ENCODE measurements at regions of chr2 and their contacts with region 1.

Region 1: DNA sequence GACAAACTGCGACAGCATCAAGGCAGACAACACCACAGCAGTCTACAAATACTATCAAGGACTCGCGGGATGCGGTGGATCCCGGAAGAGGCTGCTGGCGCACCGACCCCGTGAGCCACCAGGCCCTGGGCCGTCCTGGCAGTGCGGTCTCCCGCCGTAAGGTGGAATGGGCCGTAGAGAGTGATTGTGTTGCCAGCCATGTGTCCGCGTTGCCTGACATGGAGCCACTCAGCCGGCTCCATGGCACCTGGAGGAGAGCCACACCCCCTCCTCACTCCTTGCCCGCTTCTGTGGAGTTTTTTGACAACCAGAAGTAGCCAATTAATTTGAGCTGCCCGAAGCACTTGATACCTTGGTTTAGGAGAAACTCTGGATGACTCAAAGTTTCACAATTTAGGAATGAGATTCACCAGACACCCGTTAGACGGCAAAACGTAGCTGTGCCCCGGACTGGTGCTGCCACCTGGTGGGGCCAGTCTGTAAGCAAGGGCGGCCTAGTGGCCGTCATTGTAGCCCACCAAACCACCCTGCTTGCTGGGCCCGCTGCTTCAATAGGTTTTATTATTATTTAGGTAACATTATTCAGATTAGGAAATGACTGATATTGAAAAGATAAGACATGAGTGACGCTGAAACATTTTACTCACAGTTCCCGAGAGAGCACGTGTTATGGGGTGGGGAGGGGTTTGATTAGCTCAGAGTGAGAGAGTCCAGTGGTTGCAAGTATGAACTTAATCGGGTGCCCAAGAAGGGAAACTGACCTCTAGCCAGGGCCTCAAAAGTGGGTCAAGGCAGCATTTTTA is 10.2 kb upstream of the IMP4 start:
- DNase-seq: peak; percentile 54
- ATAC-seq: peak; percentile 62
- H3K4me3 ChIP-seq: peak overlapping the region; percentile 0 to 58 (median 53); a peak in 4 of 6 replicates
- H3K27ac ChIP-seq: no peak overlapping the region
- H3K4me1 ChIP-seq: peaks cover 46% of the 10 kb centered on the region
- H3K27me3 ChIP-seq: peaks cover 0 to 43% of the 10 kb centered on the region in 2 experiments; a peak in 3 of 5 replicates
- CTCF ChIP-seq: peak; percentile 97
- EP300 ChIP-seq: no peak
- POLR2A ChIP-seq: no peak
- RAD21 ChIP-seq: peak; percentile 95

Region 2: GRCh38 chr2:130150181-130151144 is 182.0 kb before region 1 on chr2:
- CTCF ChIA-PET with region 1: interaction called, 14 read pairs
- POLR2A ChIA-PET with region 1: no interaction called
- in situ Hi-C with region 1: loop called (anchors 10 kb)
- intact Hi-C with region 1: no loop called
- DNase-seq: no peak
- ATAC-seq: no peak
- H3K4me3 ChIP-seq: no peak overlapping the region
- H3K27ac ChIP-seq: no peak overlapping the region
- H3K4me1 ChIP-seq: no peaks in the 10 kb centered on the region
- H3K27me3 ChIP-seq: no peaks in the 10 kb centered on the region
- CTCF ChIP-seq: no peak
- EP300 ChIP-seq: no peak
- POLR2A ChIP-seq: no peak
- RAD21 ChIP-seq: no peak

Region 3: GRCh38 chr2:130181325-130181879 is 151.1 kb before region 1 on chr2 and contains the start of gene SMPD4:
- CTCF ChIA-PET with region 1: interaction called, 19 read pairs
- POLR2A ChIA-PET with region 1: interaction called, 13 read pairs
- in situ Hi-C with region 1: loop called (anchors 5 kb)
- intact Hi-C with region 1: loop called (anchors 1 kb)
- DNase-seq: peak; percentile 96
- ATAC-seq: peak; percentile 73
- H3K4me3 ChIP-seq: peak within 1 kb of the TSS; percentile 97 to 99 (median 99)
- H3K27ac ChIP-seq: peak within 1 kb of the TSS; percentile 92
- H3K4me1 ChIP-seq: peaks cover 35% of the 10 kb centered on the region
- H3K27me3 ChIP-seq: peaks cover 0 to 4% of the 10 kb centered on the region in 2 experiments; a peak in 2 of 5 replicates
- CTCF ChIP-seq: no peak
- EP300 ChIP-seq: peak; percentile 23 to 50; a peak in 1 of 4 replicates
- POLR2A ChIP-seq: peak; percentile 68 to 71
- RAD21 ChIP-seq: no peak
- total RNA-seq, gene SMPD4: 70.5 and 72.5 TPM in 2 replicates

Region 4: GRCh38 chr2:130355578-130356431 is 23.3 kb after region 1 on chr2 and contains the start of gene PTPN18:
- CTCF ChIA-PET with region 1: no interaction called
- POLR2A ChIA-PET with region 1: interaction called, 11 read pairs
- in situ Hi-C with region 1: no loop called
- intact Hi-C with region 1: no loop called
- DNase-seq: peak; percentile 87
- ATAC-seq: peak; percentile 95
- H3K4me3 ChIP-seq: peak within 1 kb of the TSS; percentile 74 to 97 (median 94)
- H3K27ac ChIP-seq: peak within 1 kb of the TSS; percentile 73
- H3K4me1 ChIP-seq: peaks cover 30% of the 10 kb centered on the region
- H3K27me3 ChIP-seq: no peaks in the 10 kb centered on the region; a peak in 1 of 5 replicates
- CTCF ChIP-seq: peak; percentile 72
- EP300 ChIP-seq: peak in 1 of 2 experiments; percentile 12; a peak in 1 of 4 replicates
- POLR2A ChIP-seq: peak; percentile 91 to 93
- RAD21 ChIP-seq: peak; percentile 82
- total RNA-seq, gene PTPN18: 10.8 and 14.8 TPM in 2 replicates